Activated B cell treated with CpG ODN at 0.5 μM for 24 hours (primary cell): ENCODE measurements at regions of chr16 and their contacts with region 1.

Region 1: GRCh38 chr16:58678716-58679115 is 5.9 kb downstream of the SLC38A7 start:
- DNase-seq: no peak
- ATAC-seq: no peak
- H3K4me3 Mint-ChIP-seq: no peak overlapping the region
- H3K27ac Mint-ChIP-seq: no peak overlapping the region
- H3K4me1 Mint-ChIP-seq: peaks cover 9% of the 10 kb centered on the region
- H3K27me3 Mint-ChIP-seq: no peaks in the 10 kb centered on the region
- CTCF ChIP-seq: no peak

Region 2: DNA sequence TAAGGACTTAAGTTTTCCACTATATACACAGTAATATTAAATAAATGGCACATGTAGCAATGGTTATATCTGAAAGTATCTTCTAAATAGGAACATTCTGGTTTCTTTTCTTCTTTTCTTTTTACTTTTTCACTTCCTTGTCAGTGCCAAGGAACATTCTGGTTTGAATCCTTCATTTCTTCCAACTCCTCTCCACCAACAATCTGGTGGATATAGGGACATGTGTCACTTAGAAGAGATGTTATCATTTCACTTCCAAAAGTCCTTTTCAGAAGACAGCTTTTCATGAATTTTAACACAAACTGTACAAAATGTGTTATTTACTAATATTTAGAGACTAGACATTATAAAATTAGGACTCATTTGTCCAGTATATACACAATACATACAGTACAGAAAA is 63.3 kb after region 1 on chr16:
- CTCF ChIA-PET with region 1: no interaction called
- POLR2A ChIA-PET with region 1: interaction called, 11 read pairs
- intact Hi-C with region 1: no loop called
- DNase-seq: no peak
- ATAC-seq: no peak
- H3K4me3 Mint-ChIP-seq: no peak overlapping the region
- H3K27ac Mint-ChIP-seq: no peak overlapping the region
- H3K4me1 Mint-ChIP-seq: no peaks in the 10 kb centered on the region
- H3K27me3 Mint-ChIP-seq: no peaks in the 10 kb centered on the region
- CTCF ChIP-seq: no peak